ENCODE measurements at regions of chr11 and their contacts with region 1.

Region 1: GRCh38 chr11:12043959-12044819 is 35.8 kb upstream of the DKK3 start:
- DNase-seq: peak; percentile 95
- ATAC-seq: peak; percentile 92
- H3K4me3 ChIP-seq: peak overlapping the region in 1 of 2 experiments; percentile 33; a peak in 2 of 4 replicates
- H3K27ac ChIP-seq: peak overlapping the region; percentile 86
- H3K4me1 ChIP-seq: peaks cover 25% of the 10 kb centered on the region
- H3K27me3 ChIP-seq: no peaks in the 10 kb centered on the region
- CTCF ChIP-seq: peak; percentile 90

Region 2: GRCh38 chr11:11798586-11799438 is 245.4 kb before region 1 on chr11:
- CTCF ChIA-PET with region 1: interaction called, 3 read pairs
- POLR2A ChIA-PET with region 1: no interaction called
- in situ Hi-C with region 1: no loop called
- intact Hi-C with region 1: loop called (anchors 2 kb)
- DNase-seq: no peak
- ATAC-seq: peak; percentile 99
- H3K4me3 ChIP-seq: no peak overlapping the region
- H3K27ac ChIP-seq: 0 out of 2 replicates have a peak overlapping the region, but pooled peaks have one; percentile 55
- H3K4me1 ChIP-seq: no peaks in the 10 kb centered on the region; the same call in 1 of the 2 replicates
- H3K27me3 ChIP-seq: peaks cover 4% of the 10 kb centered on the region; the same call in 1 of the 2 replicates
- CTCF ChIP-seq: peak; percentile 93

Region 3: GRCh38 chr11:11860103-11860979 is 183.8 kb before region 1 on chr11:
- CTCF ChIA-PET with region 1: no interaction called
- POLR2A ChIA-PET with region 1: no interaction called
- in situ Hi-C with region 1: no loop called
- intact Hi-C with region 1: no loop called
- DNase-seq: no peak
- ATAC-seq: peak; percentile 66; the same call in 1 of the 2 replicates
- H3K4me3 ChIP-seq: no peak overlapping the region
- H3K27ac ChIP-seq: peak overlapping the region; percentile 41
- H3K4me1 ChIP-seq: peaks cover 51% of the 10 kb centered on the region
- H3K27me3 ChIP-seq: no peaks in the 10 kb centered on the region
- CTCF ChIP-seq: no peak

Region 4: GRCh38 chr11:11931461-11932055 is 112.6 kb before region 1 on chr11:
- CTCF ChIA-PET with region 1: interaction called, 6 read pairs
- POLR2A ChIA-PET with region 1: no interaction called
- in situ Hi-C with region 1: no loop called
- intact Hi-C with region 1: loop called (anchors 2 kb)
- DNase-seq: no peak
- ATAC-seq: peak; percentile 62; the same call in 1 of the 2 replicates
- H3K4me3 ChIP-seq: no peak overlapping the region
- H3K27ac ChIP-seq: no peak overlapping the region
- H3K4me1 ChIP-seq: no peaks in the 10 kb centered on the region
- H3K27me3 ChIP-seq: no peaks in the 10 kb centered on the region
- CTCF ChIP-seq: peak; percentile 58; the same call in 1 of the 2 replicates

Region 5: DNA sequence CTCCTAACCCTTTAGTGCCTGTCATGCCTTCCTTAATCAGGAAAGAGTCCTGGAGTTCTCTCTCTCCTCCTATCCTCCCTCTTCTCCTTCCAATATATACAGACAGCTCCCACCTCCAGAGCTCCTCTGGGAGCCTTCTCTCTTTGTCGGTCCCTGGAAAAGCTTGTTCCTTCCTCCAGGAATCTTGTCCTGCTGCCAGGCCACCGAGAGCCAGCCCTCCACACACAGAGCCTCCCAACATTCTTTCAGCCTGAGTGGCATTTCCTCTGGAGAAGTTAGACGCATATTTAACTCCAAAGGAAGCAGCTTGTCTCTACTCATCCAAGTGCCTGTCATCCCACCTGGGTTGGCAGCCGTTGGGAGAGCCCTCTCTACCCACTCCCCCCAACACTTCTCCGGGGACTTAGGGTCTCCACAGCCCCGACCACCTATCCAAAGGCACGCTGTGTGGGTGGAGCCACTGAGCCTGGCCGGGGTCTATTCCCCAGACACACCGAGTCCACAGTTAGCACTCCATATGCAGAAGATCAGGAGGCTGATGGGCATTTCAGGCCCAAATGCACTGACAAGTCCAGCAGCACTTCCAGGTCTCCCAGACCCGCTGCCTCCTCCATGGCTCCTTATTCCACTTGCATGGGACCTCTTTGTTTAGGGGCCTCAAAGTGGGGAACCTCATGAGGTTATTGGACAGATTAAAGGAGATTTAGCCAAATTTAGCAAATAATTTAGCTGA is 66.8 kb before region 1 on chr11:
- CTCF ChIA-PET with region 1: no interaction called
- POLR2A ChIA-PET with region 1: no interaction called
- in situ Hi-C with region 1: no loop called
- intact Hi-C with region 1: loop called (anchors 5 kb)
- DNase-seq: peak; percentile 75
- ATAC-seq: peak; percentile 86
- H3K4me3 ChIP-seq: peak overlapping the region in 1 of 2 experiments; percentile 5; a peak in 1 of 4 replicates
- H3K27ac ChIP-seq: peak overlapping the region; percentile 95
- H3K4me1 ChIP-seq: peaks cover 51% of the 10 kb centered on the region
- H3K27me3 ChIP-seq: no peaks in the 10 kb centered on the region
- CTCF ChIP-seq: no peak

Region 6: DNA sequence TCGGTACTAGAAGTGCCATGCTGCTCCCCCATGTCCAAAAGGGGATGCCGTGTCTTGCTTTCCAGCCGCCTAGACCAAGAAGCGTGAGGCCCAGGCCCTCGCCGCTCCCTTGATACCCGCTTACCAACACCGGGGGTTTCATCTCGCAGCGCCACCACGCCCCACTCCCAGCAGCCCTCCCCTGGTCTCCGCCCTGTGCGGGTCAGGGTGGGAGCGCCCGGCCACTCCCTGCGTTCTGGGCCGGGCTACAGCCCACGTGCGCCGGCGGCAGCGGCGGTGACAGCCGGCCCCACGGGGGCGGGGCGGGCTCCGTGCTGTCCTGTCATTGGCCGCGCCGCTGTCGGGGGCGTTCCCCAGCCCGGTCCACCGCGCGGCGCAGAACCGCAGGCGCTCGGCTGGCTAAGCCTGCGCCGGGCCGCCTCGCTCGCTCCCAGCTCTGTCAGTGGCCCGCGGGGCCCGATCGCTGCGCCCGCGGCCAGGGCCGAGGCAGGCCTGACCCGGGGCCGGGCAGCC is 66.1 kb after region 1 on chr11 and contains the start of gene MICAL2:
- CTCF ChIA-PET with region 1: no interaction called
- POLR2A ChIA-PET with region 1: no interaction called
- in situ Hi-C with region 1: no loop called
- intact Hi-C with region 1: loop called (anchors 5 kb)
- DNase-seq: no peak
- ATAC-seq: peak; percentile 98
- H3K4me3 ChIP-seq: peak within 1 kb of the TSS; percentile 75 to 91
- H3K27ac ChIP-seq: peak within 1 kb of the TSS; percentile 88
- H3K4me1 ChIP-seq: peaks cover 26% of the 10 kb centered on the region
- H3K27me3 ChIP-seq: no peaks in the 10 kb centered on the region
- CTCF ChIP-seq: no peak
- total RNA-seq, gene MICAL2: 199 TPM

Region 7: DNA sequence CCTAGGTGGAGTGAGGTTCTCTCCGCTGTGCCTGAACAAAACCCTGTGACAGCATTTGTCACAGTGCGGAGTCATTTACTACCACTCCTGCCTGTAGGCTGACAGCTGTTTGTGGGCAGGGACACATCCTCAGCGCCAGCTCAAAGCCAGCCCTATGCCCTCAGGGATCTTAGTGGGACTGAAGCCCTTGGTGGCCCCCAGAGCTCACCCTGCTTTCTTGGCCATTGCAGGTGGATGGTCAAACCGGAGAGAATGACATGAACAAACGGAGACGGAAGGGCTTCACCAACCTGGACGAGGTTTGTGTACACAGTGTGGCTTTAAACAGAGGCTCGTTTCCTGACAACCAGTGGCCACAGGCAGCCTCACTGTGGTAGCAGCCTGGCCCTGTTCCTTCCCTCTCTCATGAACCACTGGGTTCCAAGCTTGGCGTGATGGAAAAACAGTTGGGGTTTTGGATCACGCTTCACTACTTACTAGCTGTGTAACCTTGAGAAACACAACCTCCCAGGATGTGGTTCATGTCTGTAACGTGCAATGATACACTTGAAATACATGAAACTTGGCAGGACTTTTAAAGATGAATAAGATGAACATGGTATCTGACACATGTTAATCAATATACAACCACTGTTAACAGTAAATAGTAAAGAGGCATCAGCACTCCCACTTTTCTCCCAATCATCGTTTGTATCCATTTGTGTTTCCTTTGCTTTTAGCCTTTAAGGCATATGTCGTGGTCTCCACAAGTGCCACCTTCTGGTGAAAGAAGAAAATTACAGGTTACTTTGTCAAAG is 192.0 kb after region 1 on chr11:
- CTCF ChIA-PET with region 1: no interaction called
- POLR2A ChIA-PET with region 1: no interaction called
- in situ Hi-C with region 1: no loop called
- intact Hi-C with region 1: loop called (anchors 5 kb)
- DNase-seq: peak; percentile 32
- ATAC-seq: peak; percentile 74
- H3K4me3 ChIP-seq: no peak overlapping the region
- H3K27ac ChIP-seq: peak overlapping the region; percentile 73
- H3K4me1 ChIP-seq: peaks cover 13% of the 10 kb centered on the region
- H3K27me3 ChIP-seq: no peaks in the 10 kb centered on the region
- CTCF ChIP-seq: peak; percentile 77

Region 8: DNA sequence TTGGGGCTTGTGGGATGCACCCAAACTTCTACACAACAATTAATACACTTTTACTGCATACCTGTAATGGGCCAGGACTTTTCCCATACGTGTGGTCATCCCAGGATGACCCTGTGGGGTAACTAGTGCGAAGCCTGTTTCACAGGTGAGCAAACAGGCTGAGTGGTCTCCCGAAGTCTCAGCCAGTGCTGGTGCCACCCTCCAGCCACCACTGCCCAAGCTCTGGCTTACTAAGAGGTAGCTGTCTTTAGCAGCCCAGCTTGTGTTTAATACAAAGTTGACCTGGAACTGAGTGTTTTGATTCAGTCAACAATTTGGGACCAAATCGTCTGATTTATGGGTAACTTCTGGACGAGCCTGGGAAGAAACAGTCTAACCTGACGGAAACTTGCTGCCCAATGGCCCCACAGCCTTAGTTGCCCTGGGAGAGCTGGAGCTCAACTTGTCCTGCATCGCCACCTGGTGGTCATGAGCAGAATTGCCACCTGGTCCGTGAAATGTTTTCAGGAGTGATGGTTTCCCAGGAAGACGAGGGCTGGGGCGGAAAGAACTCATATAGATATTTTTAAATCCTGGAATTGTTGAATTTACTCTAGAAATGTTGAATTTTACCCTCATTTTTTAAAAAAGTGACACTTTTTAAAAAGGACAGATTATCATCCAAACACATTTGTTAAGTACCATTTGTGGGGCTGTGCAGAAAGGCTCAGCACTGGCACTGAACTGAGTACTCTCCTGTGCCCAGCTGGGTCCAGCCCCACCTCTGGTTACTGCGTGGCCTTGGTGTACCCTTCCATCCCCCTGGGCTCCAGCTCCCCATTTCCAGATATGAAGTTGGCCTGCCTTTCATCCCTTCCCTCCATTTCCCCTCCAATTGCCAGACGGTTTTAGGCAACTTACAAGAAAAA is 237.6 kb after region 1 on chr11:
- CTCF ChIA-PET with region 1: interaction called, 12 read pairs
- POLR2A ChIA-PET with region 1: no interaction called
- in situ Hi-C with region 1: no loop called
- intact Hi-C with region 1: loop called (anchors 1 kb)
- DNase-seq: peak; percentile 67
- ATAC-seq: peak; percentile 78
- H3K4me3 ChIP-seq: no peak overlapping the region
- H3K27ac ChIP-seq: peak overlapping the region; percentile 56
- H3K4me1 ChIP-seq: peaks cover 25% of the 10 kb centered on the region
- H3K27me3 ChIP-seq: no peaks in the 10 kb centered on the region
- CTCF ChIP-seq: peak; percentile 94

Measured in Panc1 (cell line).